ENCODE measurements at regions of chr15 and their contacts with region 1.

Region 1: GRCh38 chr15:76057332-76058000 is 2.3 kb upstream of the TMEM266 start:
- DNase-seq: peak; percentile 62
- ATAC-seq: peak; percentile 55
- H3K4me3 Mint-ChIP-seq: no peak overlapping the region
- H3K27ac Mint-ChIP-seq: no peak overlapping the region
- H3K4me1 Mint-ChIP-seq: peaks cover 23% of the 10 kb centered on the region
- H3K27me3 Mint-ChIP-seq: peaks cover 34% of the 10 kb centered on the region

Region 2: GRCh38 chr15:75420698-75421097 is 636.8 kb before region 1 on chr15:
- CTCF ChIA-PET with region 1: no interaction called
- POLR2A ChIA-PET with region 1: no interaction called
- intact Hi-C with region 1: no loop called
- DNase-seq: no peak
- ATAC-seq: no peak
- H3K4me3 Mint-ChIP-seq: no peak overlapping the region
- H3K27ac Mint-ChIP-seq: no peak overlapping the region
- H3K4me1 Mint-ChIP-seq: peaks cover 15% of the 10 kb centered on the region
- H3K27me3 Mint-ChIP-seq: no peaks in the 10 kb centered on the region

Region 3: GRCh38 chr15:75723847-75724660 is 333.4 kb before region 1 on chr15:
- CTCF ChIA-PET with region 1: no interaction called
- POLR2A ChIA-PET with region 1: no interaction called
- intact Hi-C with region 1: loop called in 1 of 2 experiments (anchors 5 kb)
- DNase-seq: peak; percentile 73
- ATAC-seq: peak; percentile 53
- H3K4me3 Mint-ChIP-seq: no peak overlapping the region
- H3K27ac Mint-ChIP-seq: no peak overlapping the region
- H3K4me1 Mint-ChIP-seq: peaks cover 8% of the 10 kb centered on the region
- H3K27me3 Mint-ChIP-seq: peaks cover 9% of the 10 kb centered on the region

Region 4: DNA sequence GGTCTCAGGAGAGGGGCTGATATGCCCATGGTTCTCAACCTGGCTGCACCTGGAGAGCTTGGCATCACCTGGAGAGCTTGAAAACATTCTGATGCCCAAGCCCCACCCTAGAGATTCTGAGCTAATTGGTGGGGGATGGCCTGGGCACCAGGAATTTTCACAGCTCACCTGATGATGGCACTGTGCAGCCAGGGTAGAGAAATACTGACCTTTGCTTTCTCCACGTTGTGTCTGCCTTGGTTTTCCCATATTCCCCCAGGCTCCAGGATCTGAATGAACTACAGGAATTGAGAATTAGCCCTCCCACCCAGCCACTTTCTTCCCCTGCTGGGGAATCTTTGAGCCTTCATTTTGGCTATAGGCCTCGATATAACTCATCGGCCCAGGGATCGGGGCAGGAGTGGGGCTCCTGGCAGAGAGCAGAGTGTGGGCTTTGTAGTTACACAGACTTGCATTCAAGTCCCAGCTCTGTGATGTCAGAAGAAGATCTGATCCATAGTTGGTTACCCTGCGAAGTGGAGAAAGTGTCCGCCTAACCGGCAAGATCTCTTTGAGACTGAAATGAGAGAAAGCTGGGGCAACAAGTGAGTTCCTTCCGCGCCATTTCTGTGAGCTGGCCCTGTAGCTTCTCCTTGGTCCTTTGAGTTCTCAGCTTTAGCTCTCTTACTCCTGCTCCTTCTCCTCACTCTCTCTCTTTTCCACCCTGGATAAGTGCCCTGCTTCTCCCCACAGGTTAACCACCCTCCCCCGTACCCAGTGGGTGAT is 247.3 kb before region 1 on chr15:
- CTCF ChIA-PET with region 1: no interaction called
- POLR2A ChIA-PET with region 1: interaction called, 3 read pairs
- intact Hi-C with region 1: loop called in 1 of 2 experiments (anchors 5 kb)
- DNase-seq: peak; percentile 33
- ATAC-seq: no peak
- H3K4me3 Mint-ChIP-seq: no peak overlapping the region
- H3K27ac Mint-ChIP-seq: no peak overlapping the region
- H3K4me1 Mint-ChIP-seq: no peaks in the 10 kb centered on the region
- H3K27me3 Mint-ChIP-seq: no peaks in the 10 kb centered on the region

Region 5: DNA sequence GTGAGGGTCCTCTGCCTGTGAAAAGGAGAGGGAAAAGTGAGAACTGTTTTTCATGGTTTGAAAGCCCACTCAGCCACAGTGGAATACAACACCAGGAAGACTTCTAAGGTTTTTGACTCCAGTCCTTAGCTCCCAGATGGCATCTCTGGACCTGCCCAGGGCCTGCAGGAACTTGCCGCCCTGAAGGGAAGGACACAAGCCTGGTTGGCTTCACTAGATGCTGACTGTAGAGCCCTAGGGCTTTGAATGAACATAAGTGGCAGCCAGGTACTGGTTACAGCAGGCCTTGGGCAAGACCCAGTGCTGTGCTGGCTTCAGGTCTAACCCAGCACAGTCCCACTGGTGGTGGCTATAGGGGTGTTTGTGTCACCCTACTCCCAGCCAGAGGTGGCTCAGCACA is 19.0 kb before region 1 on chr15:
- CTCF ChIA-PET with region 1: interaction called, 10 read pairs
- POLR2A ChIA-PET with region 1: no interaction called
- intact Hi-C with region 1: no loop called
- DNase-seq: no peak
- ATAC-seq: no peak
- H3K4me3 Mint-ChIP-seq: no peak overlapping the region
- H3K27ac Mint-ChIP-seq: no peak overlapping the region
- H3K4me1 Mint-ChIP-seq: no peaks in the 10 kb centered on the region
- H3K27me3 Mint-ChIP-seq: peaks cover 28% of the 10 kb centered on the region

Region 6: DNA sequence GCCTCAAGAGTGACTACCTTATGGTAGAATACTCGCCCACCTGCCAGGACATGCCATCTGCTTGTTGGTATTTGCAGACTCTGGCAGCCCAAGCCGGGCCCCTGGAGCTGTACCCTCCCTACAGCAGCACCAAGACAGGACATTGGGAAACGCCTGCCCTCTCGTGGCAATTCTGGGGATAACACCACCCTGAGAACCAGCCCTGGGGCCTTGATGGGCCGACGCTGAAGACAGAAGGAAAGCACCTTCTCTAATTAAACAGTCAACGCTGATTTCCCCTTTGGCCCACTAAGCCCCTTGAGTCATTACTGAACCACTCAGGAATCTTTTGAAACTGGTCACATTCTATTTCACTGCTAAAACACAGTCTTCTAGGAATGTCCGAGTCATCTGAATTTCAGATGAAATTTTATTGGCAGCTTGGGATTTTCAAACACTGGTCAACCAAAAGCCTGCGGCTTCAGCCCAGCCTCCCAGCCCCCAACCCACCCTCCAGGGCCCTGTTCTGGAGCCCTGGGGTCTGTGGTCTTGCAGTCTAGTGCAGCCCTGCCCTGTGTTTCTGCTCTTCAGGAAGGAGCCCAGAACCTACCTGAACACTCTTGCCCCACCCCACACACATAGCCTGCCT is 93.6 kb after region 1 on chr15:
- CTCF ChIA-PET with region 1: interaction called, 21 read pairs
- POLR2A ChIA-PET with region 1: no interaction called
- intact Hi-C with region 1: loop called (anchors 1 to 5 kb)
- DNase-seq: peak; percentile 90
- ATAC-seq: peak; percentile 93
- H3K4me3 Mint-ChIP-seq: no peak overlapping the region
- H3K27ac Mint-ChIP-seq: no peak overlapping the region
- H3K4me1 Mint-ChIP-seq: peaks cover 22% of the 10 kb centered on the region
- H3K27me3 Mint-ChIP-seq: peaks cover 8% of the 10 kb centered on the region

Measured in activated CD4-positive, alpha-beta T cell treated with anti-CD3 and anti-CD28 coated beads for 36 hours (primary cell).